Aorta (tissue), 5 donors: ENCODE measurements at regions of chr5 and their contacts with region 1.

Region 1: GRCh38 chr5:147892821-147893232 is 13.5 kb downstream of the C5orf46 start:
- DNase-seq: peak in 1 of 2 donors; percentile 55
- ATAC-seq: peak; percentile 69
- H3K4me3 ChIP-seq: no peak overlapping the region
- H3K27ac ChIP-seq: peak overlapping the region; percentile 74 to 82
- H3K4me1 ChIP-seq: peaks cover 5 to 7% of the 10 kb centered on the region in 2 donors
- H3K27me3 ChIP-seq: no peaks in the 10 kb centered on the region

Region 2: DNA sequence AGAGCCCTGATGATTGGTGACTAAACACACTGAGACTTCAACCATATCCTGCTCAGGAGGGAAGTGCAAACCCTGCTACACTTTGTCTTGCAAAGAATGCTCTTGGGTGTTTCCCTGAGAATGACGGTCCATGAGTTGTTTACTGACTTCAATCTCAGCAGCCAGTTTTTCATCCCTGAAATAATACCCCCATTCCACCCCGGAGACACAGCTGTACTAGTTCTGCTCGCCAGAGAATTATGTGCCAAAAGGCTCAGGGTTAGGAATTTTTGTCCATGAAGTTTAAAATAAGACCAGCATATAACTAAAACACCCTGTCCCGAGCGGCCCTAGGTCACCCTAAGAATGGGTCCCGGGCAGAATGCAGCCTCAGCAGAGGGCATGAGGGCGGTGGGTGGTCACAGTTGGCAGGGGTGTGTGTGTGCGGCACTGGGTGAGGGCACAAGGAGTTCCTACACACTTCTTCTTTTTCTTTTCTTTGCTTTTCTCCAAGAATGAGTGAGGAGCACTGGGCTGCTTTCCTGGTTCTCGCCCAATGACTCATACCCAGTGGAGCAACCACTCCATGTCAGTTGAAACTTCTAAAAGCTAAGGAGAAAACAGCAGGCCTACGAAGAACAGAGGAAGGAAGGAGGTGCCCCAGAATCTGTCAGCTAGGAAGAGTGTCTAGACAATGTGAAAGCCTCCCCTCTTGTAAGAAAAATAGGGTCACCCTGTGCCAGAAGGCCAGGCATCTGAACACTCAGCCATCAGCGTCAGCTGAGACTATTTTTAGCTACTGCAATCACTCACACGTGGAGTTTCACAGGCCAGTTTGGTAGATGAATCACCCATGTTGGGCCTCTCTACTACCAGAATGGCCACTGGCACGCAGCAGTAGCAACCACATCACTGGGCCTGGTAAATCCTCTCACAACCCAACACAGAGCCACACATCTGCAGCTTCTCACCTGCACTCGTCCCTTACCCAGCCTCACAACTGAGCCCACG is 488.9 kb before region 1 on chr5:
- intact Hi-C with region 1: loop called in 1 of 2 experiments (anchors 10 kb)
- DNase-seq: peak; percentile 83 to 86
- ATAC-seq: peak; percentile 88
- H3K4me3 ChIP-seq: no peak overlapping the region
- H3K27ac ChIP-seq: peak overlapping the region; percentile 95 to 100
- H3K4me1 ChIP-seq: peaks cover 2 to 7% of the 10 kb centered on the region in 2 donors
- H3K27me3 ChIP-seq: no peaks in the 10 kb centered on the region

Region 3: GRCh38 chr5:147763791-147764525 is 128.9 kb before region 1 on chr5:
- intact Hi-C with region 1: no loop called
- DNase-seq: no peak
- ATAC-seq: no peak
- H3K4me3 ChIP-seq: no peak overlapping the region
- H3K27ac ChIP-seq: no peak overlapping the region
- H3K4me1 ChIP-seq: no peaks in the 10 kb centered on the region
- H3K27me3 ChIP-seq: no peaks in the 10 kb centered on the region

Region 4: DNA sequence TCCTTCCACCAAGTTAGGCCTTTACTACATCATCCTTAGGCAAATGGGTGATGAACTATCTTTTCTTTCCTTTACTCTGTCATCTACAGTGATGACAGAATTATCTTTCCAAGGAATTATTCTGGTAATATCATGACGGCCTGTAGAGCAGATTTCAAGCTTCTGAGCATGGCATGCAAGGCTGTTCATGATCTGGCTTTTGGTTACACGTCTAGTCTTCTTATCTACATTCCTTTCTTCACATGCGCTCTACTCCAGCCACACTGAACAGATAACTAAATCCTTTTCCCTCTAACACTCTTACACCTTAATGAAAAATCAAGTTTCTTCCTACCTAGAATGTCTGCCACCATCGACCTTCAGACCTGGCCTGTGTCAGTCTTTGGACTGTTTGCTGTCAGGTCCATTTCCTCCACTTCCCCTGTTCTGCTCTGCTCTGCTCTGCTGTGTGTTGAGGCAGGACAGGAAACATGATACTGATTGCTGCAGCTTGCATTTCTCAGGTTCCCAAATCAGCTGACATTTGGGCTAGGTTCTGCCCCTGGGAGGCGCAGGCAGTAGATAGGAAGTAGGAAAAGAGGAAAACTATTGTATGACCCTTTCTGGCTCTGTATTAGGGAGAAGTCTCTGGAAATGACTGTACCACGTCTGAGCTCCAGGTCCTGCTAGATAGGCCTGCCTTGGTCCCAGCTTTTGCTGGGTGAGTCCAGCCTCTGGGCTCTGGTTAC is 10.1 kb before region 1 on chr5:
- intact Hi-C with region 1: no loop called
- DNase-seq: no peak
- ATAC-seq: peak; percentile 12
- H3K4me3 ChIP-seq: no peak overlapping the region
- H3K27ac ChIP-seq: no peak overlapping the region
- H3K4me1 ChIP-seq: peaks cover 0 to 3% of the 10 kb centered on the region in 2 donors
- H3K27me3 ChIP-seq: no peaks in the 10 kb centered on the region

Region 5: GRCh38 chr5:148202531-148203203 is 309.8 kb after region 1 on chr5 and contains the start of gene SPINK6:
- intact Hi-C with region 1: no loop called
- DNase-seq: no peak
- ATAC-seq: no peak
- H3K4me3 ChIP-seq: no peak within 1 kb of the TSS
- H3K27ac ChIP-seq: no peak within 1 kb of the TSS
- H3K4me1 ChIP-seq: no peaks in the 10 kb centered on the region
- H3K27me3 ChIP-seq: no peaks in the 10 kb centered on the region
- total RNA-seq, gene SPINK6: not detected

Region 6: DNA sequence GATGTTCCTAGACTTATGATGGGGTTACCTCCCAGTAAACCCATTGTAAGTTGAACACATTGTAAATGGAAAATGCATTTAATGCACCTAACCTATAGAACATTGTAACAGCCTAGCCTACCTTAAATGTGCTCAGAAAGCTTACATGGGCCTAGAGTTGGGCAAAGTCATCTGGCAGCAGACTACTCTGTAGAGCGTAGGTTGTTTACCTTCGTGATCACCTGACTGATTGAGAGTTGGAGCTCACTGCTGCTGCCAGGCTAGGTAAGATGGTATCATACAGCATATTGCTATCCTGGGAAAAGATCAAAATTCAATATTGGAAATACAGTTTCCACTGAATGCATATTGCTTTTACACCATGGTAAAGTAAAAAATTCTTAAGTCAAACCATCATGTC is 666.1 kb after region 1 on chr5:
- intact Hi-C with region 1: no loop called
- DNase-seq: no peak
- ATAC-seq: no peak
- H3K4me3 ChIP-seq: no peak overlapping the region
- H3K27ac ChIP-seq: no peak overlapping the region
- H3K4me1 ChIP-seq: no peaks in the 10 kb centered on the region
- H3K27me3 ChIP-seq: no peaks in the 10 kb centered on the region